Head of caudate nucleus (tissue), 42 donors: ENCODE measurements at regions of chr15 and their contacts with region 1.

Region 1: DNA sequence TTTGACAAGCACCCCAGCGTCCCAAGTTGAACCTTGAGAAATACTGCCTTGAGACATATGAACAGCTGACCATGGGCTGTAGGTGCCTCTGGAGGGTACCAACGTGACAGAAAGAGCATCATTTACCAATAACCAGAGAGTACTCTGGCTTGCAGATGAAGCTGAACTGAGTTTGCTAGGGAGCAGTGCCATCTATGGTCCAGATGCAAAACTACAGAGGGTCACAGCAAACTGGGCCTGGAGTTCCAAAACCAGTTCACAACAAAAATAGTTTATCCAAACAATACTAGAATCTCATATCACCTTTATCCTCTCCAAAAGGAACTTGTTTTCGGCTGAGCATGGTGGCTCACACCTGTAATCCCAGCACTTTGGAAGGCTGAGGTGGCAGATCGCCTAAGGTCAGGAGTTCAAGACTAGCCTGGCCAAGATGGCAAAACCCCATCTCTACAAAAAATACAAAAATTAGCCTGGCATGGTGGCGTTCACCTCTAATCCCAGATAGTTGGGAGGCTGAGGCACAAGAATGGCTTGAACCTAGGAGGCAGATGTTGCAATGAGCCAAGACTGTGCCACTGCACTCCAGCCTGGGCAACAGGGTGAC is 69.3 kb downstream of the CHAC1 start:
- DNase-seq: peak in 39 of 42 donors; percentile 7 to 79 (median 48)

Region 2: DNA sequence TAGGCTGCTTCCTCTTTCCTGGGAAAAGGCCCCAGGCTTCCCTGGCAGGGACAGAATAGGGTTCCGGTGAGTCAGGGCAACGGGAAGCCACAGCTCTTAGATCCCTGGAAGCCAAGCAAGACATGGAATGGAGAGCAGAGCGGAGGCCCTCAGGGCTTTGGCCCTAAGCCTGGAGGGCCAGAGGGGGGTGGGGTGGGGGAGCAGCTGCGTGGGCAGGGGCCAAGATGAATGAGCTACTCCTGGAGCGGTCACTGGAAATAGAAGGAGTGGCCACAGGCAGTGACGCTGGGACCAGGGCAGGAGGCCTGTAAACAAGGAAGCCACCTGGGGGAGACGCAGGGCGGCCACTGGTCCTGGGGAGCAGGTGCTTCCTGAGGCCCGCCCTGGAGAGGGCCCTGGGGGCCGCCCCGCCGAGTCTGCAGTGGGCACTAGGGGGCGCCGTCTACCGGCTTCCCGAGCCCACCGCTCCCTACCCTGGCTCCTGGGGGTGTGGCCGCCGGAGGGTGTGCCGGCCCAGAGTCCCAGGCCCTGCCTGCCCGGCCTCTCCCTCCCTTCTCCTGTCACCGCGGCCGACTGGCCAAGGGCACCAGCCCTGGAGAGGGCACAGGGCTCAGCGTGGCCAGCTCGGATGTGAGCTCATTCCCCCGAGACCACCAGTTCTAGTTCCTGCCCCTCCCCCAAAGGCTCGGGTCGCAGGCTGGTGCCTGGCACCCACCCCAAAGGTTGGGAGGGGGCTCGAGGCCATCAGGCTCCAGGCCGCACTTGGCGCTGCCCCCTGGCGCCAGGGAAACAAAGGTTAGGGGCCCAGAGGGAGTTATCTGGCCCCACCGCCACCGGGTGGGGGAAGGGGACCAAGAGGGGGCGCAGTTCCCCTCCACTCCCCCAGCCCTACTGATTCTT is 116.2 kb before region 1 on chr15:
- intact Hi-C with region 1: loop called (anchors 5 kb)
- DNase-seq: peak in 40 of 42 donors; percentile 27 to 81 (median 60)

Region 3: DNA sequence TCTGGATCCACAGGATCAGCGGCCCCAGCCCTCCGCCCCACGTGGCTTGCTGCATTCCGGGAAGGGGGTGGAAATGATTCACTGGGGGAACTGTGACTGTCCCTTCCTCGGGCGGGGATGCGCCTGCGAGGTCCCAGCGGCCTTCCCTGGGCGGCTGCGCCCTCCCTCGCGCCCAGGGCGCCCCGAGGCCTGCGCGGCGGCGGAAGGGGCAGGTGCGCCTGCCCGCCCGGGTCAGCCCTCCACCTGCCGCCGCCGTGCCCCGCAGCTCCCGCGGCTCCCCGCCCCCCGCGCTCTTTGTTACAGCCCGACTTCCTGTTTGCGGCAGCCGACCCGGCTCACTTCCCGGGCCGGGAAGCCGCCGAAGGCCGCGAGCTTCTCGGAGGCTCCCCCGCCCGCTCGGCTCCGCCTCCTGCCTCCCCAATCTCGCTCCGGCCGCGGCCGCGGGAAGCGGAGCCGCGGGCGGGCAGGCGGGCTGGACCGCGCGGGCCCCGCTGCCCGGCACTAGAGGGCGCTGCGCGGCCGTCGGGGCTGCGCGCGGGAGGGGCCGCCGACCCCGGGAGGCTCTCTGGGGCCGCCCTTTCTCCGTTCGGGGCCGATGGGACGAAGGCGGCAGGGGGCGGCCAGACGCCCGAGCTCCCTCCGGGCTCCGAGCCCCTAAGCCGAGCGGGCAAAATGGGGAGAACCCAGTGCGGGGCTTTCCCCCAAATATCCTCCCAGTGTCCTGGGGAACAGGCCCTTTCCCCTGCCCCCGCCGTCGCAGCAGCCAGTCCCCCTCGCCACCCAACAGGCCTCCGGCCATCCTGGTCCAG is 80.9 kb before region 1 on chr15:
- intact Hi-C with region 1: loop called (anchors 5 kb)
- DNase-seq: peak in 39 of 42 donors; percentile 39 to 92 (median 64)